Activated T-helper 2 cell treated with anti-CD3 and anti-CD28 coated beads, Interferon-gamma antibody, Interleukin-2, Interleukin-4, amounts not matched to agents 10 μg/mL and 5 μg/mL and 100 μg/mL, durations not matched to agents 14 hours and 24 hours and 36 hours (primary cell): ENCODE measurements at regions of chr3 and their contacts with region 1.

Region 1: DNA sequence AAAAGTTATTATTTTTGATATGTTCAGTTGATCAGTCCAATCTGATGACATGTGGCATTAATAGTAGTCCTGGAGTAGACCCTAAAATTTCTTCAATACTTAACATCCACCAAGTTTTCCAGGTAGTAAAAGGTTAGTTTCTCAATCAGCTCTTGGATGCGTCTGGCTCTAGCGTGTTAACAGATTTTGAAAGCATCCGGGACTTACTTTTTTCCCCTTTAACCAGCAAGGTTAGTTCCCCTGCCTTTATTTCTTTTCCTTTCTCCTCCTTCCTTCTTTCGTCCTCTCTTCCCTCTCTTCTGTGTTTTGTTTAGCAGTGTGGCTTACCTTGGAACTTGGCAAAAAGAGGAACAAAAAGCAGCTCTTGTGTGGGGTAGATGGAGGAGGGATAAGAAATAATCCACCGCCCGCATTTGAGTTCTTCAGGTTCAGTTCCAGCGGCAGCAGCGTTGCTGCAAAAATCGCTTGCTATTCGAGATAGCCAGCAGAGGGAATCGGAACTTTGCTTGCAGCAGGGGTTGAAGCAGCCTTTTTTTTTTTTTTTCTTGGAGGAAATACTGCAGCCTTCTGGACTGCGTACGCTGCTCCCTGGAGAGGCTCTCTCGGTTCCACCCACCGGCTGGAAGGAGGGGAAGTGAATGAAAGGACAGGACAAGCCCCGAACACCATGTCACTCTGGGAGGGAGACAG is at the start of gene RBMS3:
- DNase-seq: no peak
- H3K4me3 Mint-ChIP-seq: peak within 1 kb of the TSS; percentile 80
- H3K27ac Mint-ChIP-seq: peak within 1 kb of the TSS; percentile 67
- H3K4me1 Mint-ChIP-seq: peaks cover 30% of the 10 kb centered on the region
- H3K27me3 Mint-ChIP-seq: peaks cover 19% of the 10 kb centered on the region
- total RNA-seq, gene RBMS3: 4.5 and 5.3 TPM in 2 replicates

Region 2: DNA sequence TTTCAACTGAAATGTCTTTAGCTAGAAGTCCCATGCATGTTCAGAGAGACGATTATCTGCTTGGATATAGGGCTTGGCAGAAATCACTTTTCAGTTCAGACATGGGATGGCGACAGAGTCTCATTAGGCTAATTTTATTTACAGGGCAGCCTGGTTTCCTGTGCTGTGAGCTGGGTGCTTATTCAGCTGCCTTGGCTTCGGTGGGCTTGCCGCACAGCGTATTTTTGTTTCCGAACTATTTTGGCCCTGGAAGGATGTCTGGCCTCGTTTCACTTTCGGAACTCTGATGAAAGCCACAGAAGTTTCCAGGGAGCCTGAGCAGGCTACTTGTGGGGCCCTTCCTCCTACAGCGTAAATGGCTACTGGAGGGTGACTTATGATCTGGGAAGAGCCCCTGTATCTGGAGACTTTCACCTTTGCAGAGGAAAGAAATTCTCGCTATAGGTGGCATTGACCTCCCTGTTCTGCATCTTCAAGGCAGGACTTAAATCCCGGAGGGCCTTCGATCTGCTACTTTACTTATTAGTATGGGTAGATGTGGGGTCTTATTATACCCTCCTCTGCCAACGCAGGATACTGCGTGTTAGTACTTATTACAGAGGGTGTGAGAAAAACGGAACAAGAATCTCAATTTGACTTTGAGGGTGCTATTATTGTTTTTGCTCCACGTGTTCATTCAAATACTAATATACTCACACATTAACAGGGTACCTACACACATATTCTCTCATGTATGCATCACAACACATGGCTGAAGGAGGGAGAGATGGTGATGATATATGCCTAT is 363.6 kb before region 1 on chr3:
- intact Hi-C with region 1: loop called (anchors 5 kb)
- DNase-seq: no peak
- H3K4me3 Mint-ChIP-seq: no peak overlapping the region
- H3K27ac Mint-ChIP-seq: no peak overlapping the region
- H3K4me1 Mint-ChIP-seq: peaks cover 20% of the 10 kb centered on the region
- H3K27me3 Mint-ChIP-seq: peaks cover 8% of the 10 kb centered on the region

Region 3: GRCh38 chr3:28935146-28935545 is 345.4 kb before region 1 on chr3:
- intact Hi-C with region 1: loop called (anchors 5 kb)
- DNase-seq: no peak
- H3K4me3 Mint-ChIP-seq: peak overlapping the region; percentile 3
- H3K27ac Mint-ChIP-seq: peak overlapping the region; percentile 77
- H3K4me1 Mint-ChIP-seq: peaks cover 27% of the 10 kb centered on the region
- H3K27me3 Mint-ChIP-seq: no peaks in the 10 kb centered on the region

Region 4: GRCh38 chr3:29026286-29026685 is 254.3 kb before region 1 on chr3:
- intact Hi-C with region 1: loop called (anchors 1 kb)
- DNase-seq: no peak
- H3K4me3 Mint-ChIP-seq: no peak overlapping the region
- H3K27ac Mint-ChIP-seq: peak overlapping the region; percentile 6
- H3K4me1 Mint-ChIP-seq: peaks cover 9% of the 10 kb centered on the region
- H3K27me3 Mint-ChIP-seq: no peaks in the 10 kb centered on the region

Region 5: GRCh38 chr3:29186982-29187725 is 93.4 kb before region 1 on chr3:
- intact Hi-C with region 1: loop called (anchors 1 kb)
- DNase-seq: no peak
- H3K4me3 Mint-ChIP-seq: no peak overlapping the region
- H3K27ac Mint-ChIP-seq: peak overlapping the region; percentile 39
- H3K4me1 Mint-ChIP-seq: peaks cover 30% of the 10 kb centered on the region
- H3K27me3 Mint-ChIP-seq: no peaks in the 10 kb centered on the region

Region 6: GRCh38 chr3:29255854-29256696 is 24.5 kb before region 1 on chr3:
- intact Hi-C with region 1: loop called (anchors 2 kb)
- DNase-seq: no peak
- H3K4me3 Mint-ChIP-seq: no peak overlapping the region
- H3K27ac Mint-ChIP-seq: no peak overlapping the region
- H3K4me1 Mint-ChIP-seq: peaks cover 10% of the 10 kb centered on the region
- H3K27me3 Mint-ChIP-seq: peaks cover 2% of the 10 kb centered on the region